ENCODE measurements at regions of chr6 and their contacts with region 1.

Region 1: DNA sequence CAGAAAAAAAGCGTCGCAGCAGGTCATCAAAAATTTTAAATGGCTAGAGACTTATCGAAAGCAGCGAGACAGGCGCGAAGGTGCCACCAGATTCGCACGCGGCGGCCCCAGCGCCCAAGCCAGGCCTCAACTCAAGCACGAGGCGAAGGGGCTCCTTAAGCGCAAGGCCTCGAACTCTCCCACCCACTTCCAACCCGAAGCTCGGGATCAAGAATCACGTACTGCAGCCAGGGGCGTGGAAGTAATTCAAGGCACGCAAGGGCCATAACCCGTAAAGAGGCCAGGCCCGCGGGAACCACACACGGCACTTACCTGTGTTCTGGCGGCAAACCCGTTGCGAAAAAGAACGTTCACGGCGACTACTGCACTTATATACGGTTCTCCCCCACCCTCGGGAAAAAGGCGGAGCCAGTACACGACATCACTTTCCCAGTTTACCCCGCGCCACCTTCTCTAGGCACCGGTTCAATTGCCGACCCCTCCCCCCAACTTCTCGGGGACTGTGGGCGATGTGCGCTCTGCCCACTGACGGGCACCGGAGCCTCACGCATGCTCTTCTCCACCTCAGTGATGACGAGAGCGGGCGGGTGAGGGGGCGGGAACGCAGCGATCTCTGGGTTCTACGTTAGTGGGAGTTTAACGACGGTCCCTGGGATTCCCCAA is at the start of gene EEF1A1:
- DNase-seq: peak; percentile 78 to 99 (median 86)
- ATAC-seq: peak; percentile 75
- H3K4me3 ChIP-seq: peak within 1 kb of the TSS; percentile 80
- H3K27ac ChIP-seq: peak within 1 kb of the TSS; percentile 96
- H3K4me1 ChIP-seq: peaks cover 2 to 6% of the 10 kb centered on the region in 2 experiments; a peak in 3 of 5 replicates
- H3K27me3 ChIP-seq: no peaks in the 10 kb centered on the region
- CTCF ChIP-seq: no peak
- EP300 ChIP-seq: peak; percentile 9
- POLR2A ChIP-seq: peak; percentile 100
- RAD21 ChIP-seq: peak; percentile 7 to 16; a peak in 1 of 4 replicates
- polyA plus RNA-seq, gene EEF1A1: 6,453 to 7,909 TPM

Region 2: GRCh38 chr6:72560721-72561593 is 959.9 kb before region 1 on chr6:
- CTCF ChIA-PET with region 1: no interaction called
- POLR2A ChIA-PET with region 1: interaction called, 4 read pairs
- in situ Hi-C with region 1: no loop called
- intact Hi-C with region 1: loop called (anchors 5 kb)
- DNase-seq: peak; percentile 60 to 98 (median 73)
- ATAC-seq: peak; percentile 91
- H3K4me3 ChIP-seq: peak overlapping the region; percentile 30
- H3K27ac ChIP-seq: peak overlapping the region; percentile 98
- H3K4me1 ChIP-seq: peaks cover 3 to 27% of the 10 kb centered on the region in 2 experiments
- H3K27me3 ChIP-seq: no peaks in the 10 kb centered on the region
- CTCF ChIP-seq: peak in 2 of 3 experiments; percentile 42 to 61; a peak in 4 of 6 replicates
- EP300 ChIP-seq: peak; percentile 96
- POLR2A ChIP-seq: peak; percentile 73
- RAD21 ChIP-seq: peak; percentile 6 to 19; a peak in 2 of 4 replicates

Region 3: DNA sequence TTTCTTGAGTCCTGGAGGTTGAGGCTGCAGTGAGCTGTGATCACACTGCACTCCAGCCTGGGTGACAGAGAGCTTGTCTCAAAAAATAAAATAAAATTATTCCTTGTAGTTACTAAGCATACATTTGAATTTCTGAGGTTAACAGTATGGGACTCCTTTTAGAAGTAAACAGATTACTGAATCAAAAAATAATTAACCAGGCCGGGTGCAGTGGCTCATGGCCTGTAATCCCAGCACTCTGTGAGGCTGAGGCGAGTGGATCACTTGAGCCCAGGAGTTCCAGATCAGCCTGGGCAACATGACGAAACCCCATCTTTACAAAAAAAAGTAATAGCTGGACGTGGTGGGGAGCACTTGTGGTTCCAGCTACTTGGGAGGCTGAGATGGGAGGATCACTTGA is 22.1 kb after region 1 on chr6:
- CTCF ChIA-PET with region 1: no interaction called
- POLR2A ChIA-PET with region 1: interaction called, 29 read pairs
- in situ Hi-C with region 1: no loop called
- intact Hi-C with region 1: no loop called
- DNase-seq: no peak
- ATAC-seq: no peak
- H3K4me3 ChIP-seq: no peak overlapping the region
- H3K27ac ChIP-seq: no peak overlapping the region
- H3K4me1 ChIP-seq: no peaks in the 10 kb centered on the region; a peak in 1 of 5 replicates
- H3K27me3 ChIP-seq: no peaks in the 10 kb centered on the region
- CTCF ChIP-seq: no peak
- EP300 ChIP-seq: no peak
- POLR2A ChIP-seq: no peak
- RAD21 ChIP-seq: no peak

Region 4: GRCh38 chr6:73580247-73581149 is 59.7 kb after region 1 on chr6:
- CTCF ChIA-PET with region 1: interaction called, 4 read pairs
- POLR2A ChIA-PET with region 1: interaction called, 38 read pairs
- in situ Hi-C with region 1: loop called (anchors 5 kb)
- intact Hi-C with region 1: loop called (anchors 1 kb)
- DNase-seq: peak; percentile 81 to 93 (median 84)
- ATAC-seq: peak; percentile 98
- H3K4me3 ChIP-seq: peak overlapping the region; percentile 23
- H3K27ac ChIP-seq: peak overlapping the region; percentile 93
- H3K4me1 ChIP-seq: peaks cover 16 to 26% of the 10 kb centered on the region in 2 experiments
- H3K27me3 ChIP-seq: no peaks in the 10 kb centered on the region
- CTCF ChIP-seq: peak; percentile 75 to 88 (median 79)
- EP300 ChIP-seq: no peak
- POLR2A ChIP-seq: peak; percentile 76
- RAD21 ChIP-seq: peak; percentile 49 to 57; a peak in 3 of 4 replicates

Region 5: DNA sequence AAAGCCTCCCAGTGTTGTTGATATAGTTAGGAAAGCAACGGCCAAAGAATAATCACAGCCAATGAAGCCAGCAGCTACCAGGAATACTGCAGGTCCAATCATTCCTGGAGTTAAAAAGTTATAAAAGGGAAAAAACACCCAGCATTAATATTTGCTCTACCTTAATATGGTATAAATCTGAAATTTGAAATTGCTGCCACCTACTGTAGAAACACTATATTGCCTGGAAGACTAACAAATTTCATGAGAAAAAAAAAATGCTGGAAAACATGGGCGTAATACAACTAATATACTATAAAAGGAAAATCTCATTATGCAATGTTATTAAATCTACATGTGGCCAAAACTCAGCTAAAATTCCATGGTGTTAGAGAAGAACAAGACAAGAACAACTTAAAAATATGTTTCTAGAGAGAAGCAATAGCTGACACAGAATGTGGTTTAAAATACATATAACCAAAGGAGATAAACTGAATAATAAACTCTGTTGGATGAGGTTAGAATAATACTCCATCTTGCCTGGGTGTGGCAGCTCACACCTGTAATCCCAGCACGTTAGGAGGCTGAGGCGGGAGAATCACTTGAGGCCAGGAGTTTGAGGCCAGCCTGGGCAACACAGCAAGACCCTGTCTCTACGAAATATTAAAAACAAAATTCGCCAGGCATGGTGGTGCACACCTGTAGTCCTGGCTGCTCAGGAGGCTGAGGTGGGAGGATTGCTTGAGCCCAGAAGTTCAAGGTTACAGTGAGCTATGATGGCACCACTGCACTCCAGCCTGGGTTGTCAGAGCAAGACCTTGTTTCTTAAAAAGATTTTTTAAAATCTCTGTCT is 89.8 kb after region 1 on chr6:
- CTCF ChIA-PET with region 1: interaction called, 36 read pairs
- POLR2A ChIA-PET with region 1: interaction called, 34 read pairs
- in situ Hi-C with region 1: no loop called
- intact Hi-C with region 1: no loop called
- DNase-seq: peak in 2 of 4 experiments; percentile 28 to 46
- ATAC-seq: peak; percentile 64
- H3K4me3 ChIP-seq: no peak overlapping the region
- H3K27ac ChIP-seq: no peak overlapping the region
- H3K4me1 ChIP-seq: no peaks in the 10 kb centered on the region
- H3K27me3 ChIP-seq: no peaks in the 10 kb centered on the region
- CTCF ChIP-seq: peak; percentile 41 to 72 (median 50); a peak in 4 of 6 replicates
- EP300 ChIP-seq: no peak
- POLR2A ChIP-seq: no peak
- RAD21 ChIP-seq: peak; percentile 83 to 86

Region 6: DNA sequence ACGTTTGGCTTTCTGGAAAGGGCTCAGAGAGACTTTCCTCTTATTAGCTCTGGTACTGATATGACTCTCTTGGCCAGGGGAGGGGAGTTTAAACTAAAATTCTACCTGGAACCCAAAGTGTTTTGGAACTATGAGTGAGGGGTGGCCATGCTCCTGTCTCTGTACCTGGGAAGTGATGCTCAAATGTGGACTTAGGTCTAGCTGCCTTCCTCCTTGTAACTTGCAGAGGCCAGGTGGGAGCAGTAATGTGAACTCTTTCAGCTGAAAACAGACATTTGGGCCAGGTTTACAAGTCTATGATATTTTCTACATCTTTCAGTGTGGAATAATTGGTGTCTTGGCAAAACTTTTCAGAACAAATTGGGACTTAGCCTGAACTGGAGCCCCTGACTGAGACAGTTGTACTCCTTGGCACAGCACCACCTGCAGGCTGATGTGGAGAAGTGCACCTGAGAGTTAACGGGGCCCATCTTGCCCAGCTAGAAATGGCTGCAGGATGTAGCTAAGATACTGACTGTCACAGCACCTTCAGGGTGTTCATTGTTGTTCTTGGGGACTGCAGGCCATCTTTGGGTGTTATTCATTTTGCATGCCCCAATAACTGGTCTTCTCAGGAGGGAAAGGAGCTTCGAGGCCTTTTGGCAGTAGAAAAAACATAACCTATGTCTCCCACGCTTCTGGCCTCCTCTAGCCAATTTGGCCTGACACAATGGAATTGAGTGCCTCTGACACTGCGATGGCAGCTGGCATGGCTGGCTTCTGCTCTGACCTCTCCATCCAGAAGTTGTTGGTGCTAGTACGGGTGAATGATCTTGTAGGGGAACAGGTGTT is 212.2 kb after region 1 on chr6:
- CTCF ChIA-PET with region 1: no interaction called
- POLR2A ChIA-PET with region 1: no interaction called
- in situ Hi-C with region 1: no loop called
- intact Hi-C with region 1: no loop called
- DNase-seq: peak; percentile 64 to 77 (median 70)
- ATAC-seq: peak; percentile 98
- H3K4me3 ChIP-seq: no peak overlapping the region
- H3K27ac ChIP-seq: no peak overlapping the region
- H3K4me1 ChIP-seq: no peaks in the 10 kb centered on the region
- H3K27me3 ChIP-seq: no peaks in the 10 kb centered on the region
- CTCF ChIP-seq: peak; percentile 81 to 92 (median 86)
- EP300 ChIP-seq: no peak
- POLR2A ChIP-seq: no peak
- RAD21 ChIP-seq: peak; percentile 78 to 83

Region 7: GRCh38 chr6:73898624-73899023 is 377.8 kb after region 1 on chr6:
- CTCF ChIA-PET with region 1: no interaction called
- POLR2A ChIA-PET with region 1: no interaction called
- in situ Hi-C with region 1: no loop called
- intact Hi-C with region 1: no loop called
- DNase-seq: no peak
- ATAC-seq: no peak
- H3K4me3 ChIP-seq: no peak overlapping the region
- H3K27ac ChIP-seq: no peak overlapping the region
- H3K4me1 ChIP-seq: no peaks in the 10 kb centered on the region
- H3K27me3 ChIP-seq: no peaks in the 10 kb centered on the region
- CTCF ChIP-seq: no peak
- EP300 ChIP-seq: no peak
- POLR2A ChIP-seq: no peak
- RAD21 ChIP-seq: no peak

Region 8: GRCh38 chr6:75284632-75285286 is 1763.9 kb after region 1 on chr6 and contains the start of gene TMEM30A:
- CTCF ChIA-PET with region 1: no interaction called
- POLR2A ChIA-PET with region 1: interaction called, 3 read pairs
- in situ Hi-C with region 1: no loop called
- intact Hi-C with region 1: loop called (anchors 10 kb)
- DNase-seq: peak; percentile 95 to 99 (median 96)
- ATAC-seq: peak; percentile 88
- H3K4me3 ChIP-seq: peak within 1 kb of the TSS; percentile 95
- H3K27ac ChIP-seq: peak within 1 kb of the TSS; percentile 89
- H3K4me1 ChIP-seq: peaks cover 0 to 15% of the 10 kb centered on the region in 2 experiments; a peak in 3 of 5 replicates
- H3K27me3 ChIP-seq: no peaks in the 10 kb centered on the region
- CTCF ChIP-seq: no peak
- EP300 ChIP-seq: peak; percentile 57
- POLR2A ChIP-seq: peak; percentile 92
- RAD21 ChIP-seq: no peak
- polyA plus RNA-seq, gene TMEM30A: 6.5 to 9.0 TPM